Panc1 (cell line): ENCODE measurements at regions of chr5 and their contacts with region 1.

Region 1: GRCh38 chr5:72842816-72843215 is 26.4 kb downstream of the TNPO1 start:
- DNase-seq: peak; percentile 73
- ATAC-seq: peak; percentile 86
- H3K4me3 ChIP-seq: no peak overlapping the region
- H3K27ac ChIP-seq: peak overlapping the region; percentile 18; the same call in 1 of the 2 replicates
- H3K4me1 ChIP-seq: peaks cover 63% of the 10 kb centered on the region
- H3K27me3 ChIP-seq: no peaks in the 10 kb centered on the region
- CTCF ChIP-seq: peak; percentile 61

Region 2: DNA sequence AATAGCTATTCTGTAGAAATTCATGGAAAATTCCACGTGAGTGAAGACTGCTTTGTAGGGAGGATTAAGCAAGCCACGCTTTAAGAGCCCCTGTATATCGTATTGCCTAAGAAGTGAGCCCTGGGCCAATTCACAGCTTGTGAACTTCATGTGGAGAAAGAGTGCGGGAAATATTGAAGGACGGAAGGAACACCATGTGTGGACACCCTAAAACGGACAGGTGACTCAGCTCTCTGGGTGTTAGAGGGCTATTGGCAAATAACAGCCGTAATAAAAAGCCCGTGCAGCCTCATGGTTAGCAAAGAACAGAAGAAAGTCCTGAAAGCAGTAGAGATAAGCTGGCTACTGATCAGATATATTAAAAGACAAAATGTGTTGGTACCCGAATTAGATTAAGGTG is 362.0 kb before region 1 on chr5:
- CTCF ChIA-PET with region 1: no interaction called
- POLR2A ChIA-PET with region 1: interaction called, 11 read pairs
- in situ Hi-C with region 1: no loop called
- intact Hi-C with region 1: no loop called
- DNase-seq: no peak
- ATAC-seq: no peak
- H3K4me3 ChIP-seq: no peak overlapping the region
- H3K27ac ChIP-seq: no peak overlapping the region
- H3K4me1 ChIP-seq: no peaks in the 10 kb centered on the region
- H3K27me3 ChIP-seq: 0 out of 2 replicates have a peak, but pooled peaks cover 2% of the 10 kb centered on the region
- CTCF ChIP-seq: no peak

Region 3: GRCh38 chr5:73007051-73007450 is 164.2 kb after region 1 on chr5:
- CTCF ChIA-PET with region 1: no interaction called
- POLR2A ChIA-PET with region 1: no interaction called
- in situ Hi-C with region 1: no loop called
- intact Hi-C with region 1: no loop called
- DNase-seq: no peak
- ATAC-seq: no peak
- H3K4me3 ChIP-seq: no peak overlapping the region
- H3K27ac ChIP-seq: no peak overlapping the region
- H3K4me1 ChIP-seq: no peaks in the 10 kb centered on the region
- H3K27me3 ChIP-seq: no peaks in the 10 kb centered on the region
- CTCF ChIP-seq: no peak